ENCODE measurements at regions of chr1 and their contacts with region 1.

Region 1: DNA sequence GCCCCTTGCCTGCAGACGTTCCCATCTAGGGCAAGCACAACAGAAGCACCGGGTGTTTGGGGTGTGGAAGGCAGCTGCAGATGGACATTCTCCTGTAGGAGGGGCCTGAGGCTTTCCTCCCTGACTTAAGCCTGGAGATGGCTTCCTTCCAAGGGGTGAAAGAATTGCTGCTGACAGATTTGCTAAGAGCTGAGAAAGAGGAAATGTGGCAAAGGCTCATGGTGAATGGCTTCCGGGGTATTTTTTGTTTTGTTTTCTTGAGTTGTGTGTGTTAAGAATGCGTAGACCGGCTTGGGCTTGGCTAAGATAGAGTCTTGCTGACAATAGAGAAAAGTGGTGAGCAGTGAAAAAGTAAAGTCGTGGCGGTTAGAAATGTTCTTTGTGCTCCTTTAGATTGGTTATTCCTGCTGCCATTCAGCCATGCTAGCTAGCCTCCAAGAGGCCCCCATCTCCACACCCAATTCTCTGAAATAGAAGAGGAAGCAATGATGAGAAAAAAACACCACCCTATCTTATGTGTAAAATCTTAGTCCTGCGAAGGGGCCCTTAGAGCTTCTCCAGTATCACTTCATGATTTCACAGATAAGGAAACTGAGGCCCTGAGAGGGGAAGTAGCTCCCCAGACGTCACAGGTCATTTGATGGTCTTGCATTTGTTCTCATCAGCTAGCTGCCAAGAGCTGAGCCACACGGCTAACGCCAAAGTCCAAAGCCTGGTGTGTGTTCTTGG is 36.9 kb downstream of the EIF2D start:
- DNase-seq: peak in 31 of 35 experiments; percentile 34 to 85 (median 58)
- ATAC-seq: peak; percentile 75 to 81 (median 77)
- H3K4me3 ChIP-seq: peak overlapping the region; percentile 8 to 35
- H3K4me3 Mint-ChIP-seq: peak overlapping the region; percentile 73 to 96 (median 74)
- H3K27ac ChIP-seq: peak overlapping the region; percentile 94
- H3K27ac Mint-ChIP-seq: peak overlapping the region; percentile 97 to 99
- H3K4me1 ChIP-seq: peaks cover 82 to 98% of the 10 kb centered on the region in 2 experiments
- H3K4me1 Mint-ChIP-seq: peaks cover 99 to 100% (median 99%) of the 10 kb centered on the region in 3 donors
- H3K27me3 ChIP-seq: no peaks in the 10 kb centered on the region
- H3K27me3 Mint-ChIP-seq: no peaks in the 10 kb centered on the region

Region 2: GRCh38 chr1:206556750-206557635 is 18.3 kb before region 1 on chr1:
- CTCF ChIA-PET with region 1: interaction called, 15 to 70 read pairs
- POLR2A ChIA-PET with region 1: interaction called, 10 to 12 read pairs
- DNase-seq: peak; percentile 82 to 94 (median 88)
- ATAC-seq: peak; percentile 74 to 78 (median 76)
- H3K4me3 ChIP-seq: peak overlapping the region; percentile 97 to 100
- H3K4me3 Mint-ChIP-seq: peak overlapping the region; percentile 88 to 97 (median 96)
- H3K27ac ChIP-seq: peak overlapping the region; percentile 81
- H3K27ac Mint-ChIP-seq: peak overlapping the region; percentile 97 to 99
- H3K4me1 ChIP-seq: peaks cover 58 to 75% of the 10 kb centered on the region in 2 experiments
- H3K4me1 Mint-ChIP-seq: peaks cover 71 to 81% (median 77%) of the 10 kb centered on the region in 3 donors
- H3K27me3 ChIP-seq: no peaks in the 10 kb centered on the region
- H3K27me3 Mint-ChIP-seq: no peaks in the 10 kb centered on the region

Region 3: DNA sequence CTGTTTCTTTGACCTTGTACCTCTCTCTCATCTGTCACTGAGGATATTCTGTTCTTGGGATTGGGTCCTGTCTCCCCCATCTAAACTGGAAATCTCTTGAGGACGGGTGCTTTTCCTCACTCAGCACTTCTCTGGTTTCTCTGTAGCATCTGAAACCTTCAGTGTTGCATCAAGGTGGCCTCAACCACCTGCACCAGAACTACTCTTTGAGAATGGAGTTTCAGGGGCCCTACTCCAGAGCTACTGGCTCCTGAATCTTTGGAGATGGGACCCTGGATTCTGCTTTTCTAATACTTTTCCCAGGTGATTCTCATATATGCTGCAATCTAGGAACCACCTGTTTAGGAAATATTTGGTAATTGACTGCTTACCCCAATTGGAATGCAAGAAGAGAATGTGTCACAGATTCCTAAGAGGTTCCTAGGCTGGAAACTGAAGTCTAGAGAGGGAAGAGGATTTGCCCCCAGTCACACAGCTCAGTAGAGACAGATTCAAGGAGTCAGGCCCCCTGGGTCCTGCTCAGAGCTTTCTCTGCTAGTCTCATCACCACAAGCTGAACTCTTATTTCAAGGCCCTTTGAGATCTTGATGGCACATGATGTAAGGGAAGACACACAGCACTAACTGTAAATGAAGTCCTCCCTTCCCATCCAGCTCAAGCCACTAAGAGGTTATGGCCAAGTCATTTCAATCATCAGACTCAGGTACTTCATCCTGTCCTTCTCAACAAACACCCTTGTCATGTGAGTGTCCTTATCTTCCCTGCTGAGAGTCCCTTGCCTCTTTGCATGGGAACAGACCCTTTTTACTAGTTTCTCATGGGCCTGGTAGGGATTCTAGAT is 11.7 kb before region 1 on chr1:
- CTCF ChIA-PET with region 1: interaction called, 4 to 70 read pairs
- POLR2A ChIA-PET with region 1: interaction called, 10 to 12 read pairs
- DNase-seq: no peak
- ATAC-seq: peak in 2 of 4 experiments; percentile 9 to 28
- H3K4me3 ChIP-seq: peak overlapping the region; percentile 11 to 42
- H3K4me3 Mint-ChIP-seq: peak overlapping the region; percentile 68 to 96 (median 75)
- H3K27ac ChIP-seq: peak overlapping the region; percentile 81
- H3K27ac Mint-ChIP-seq: peak overlapping the region; percentile 97 to 99
- H3K4me1 ChIP-seq: peaks cover 81 to 94% of the 10 kb centered on the region in 2 experiments
- H3K4me1 Mint-ChIP-seq: peaks cover 91 to 96% (median 94%) of the 10 kb centered on the region in 3 donors
- H3K27me3 ChIP-seq: no peaks in the 10 kb centered on the region
- H3K27me3 Mint-ChIP-seq: no peaks in the 10 kb centered on the region

Region 4: GRCh38 chr1:206674745-206675175 is 99.4 kb after region 1 on chr1:
- CTCF ChIA-PET with region 1: no interaction called
- POLR2A ChIA-PET with region 1: no interaction called
- DNase-seq: no peak
- ATAC-seq: no peak
- H3K4me3 ChIP-seq: no peak overlapping the region
- H3K4me3 Mint-ChIP-seq: no peak overlapping the region
- H3K27ac ChIP-seq: no peak overlapping the region
- H3K27ac Mint-ChIP-seq: no peak overlapping the region
- H3K4me1 ChIP-seq: no peaks in the 10 kb centered on the region
- H3K4me1 Mint-ChIP-seq: peaks cover 0 to 4% (median 0%) of the 10 kb centered on the region in 3 donors
- H3K27me3 ChIP-seq: no peaks in the 10 kb centered on the region
- H3K27me3 Mint-ChIP-seq: peaks cover 0 to 1% of the 10 kb centered on the region in 2 donors

Region 5: GRCh38 chr1:207218512-207219362 is 643.4 kb after region 1 on chr1:
- CTCF ChIA-PET with region 1: no interaction called
- POLR2A ChIA-PET with region 1: no interaction called
- DNase-seq: no peak
- ATAC-seq: no peak
- H3K4me3 ChIP-seq: no peak overlapping the region
- H3K4me3 Mint-ChIP-seq: no peak overlapping the region
- H3K27ac ChIP-seq: no peak overlapping the region
- H3K27ac Mint-ChIP-seq: no peak overlapping the region
- H3K4me1 ChIP-seq: no peaks in the 10 kb centered on the region
- H3K4me1 Mint-ChIP-seq: peaks cover 6 to 12% (median 11%) of the 10 kb centered on the region in 3 donors
- H3K27me3 ChIP-seq: peaks cover 0 to 3% of the 10 kb centered on the region in 2 experiments
- H3K27me3 Mint-ChIP-seq: peaks cover 0 to 9% of the 10 kb centered on the region in 2 donors

Measured in T-cell (primary cell).